H1 (cell line): ENCODE measurements at regions of chr15 and their contacts with region 1.

Region 1: GRCh38 chr15:66504563-66505429 is at the starts of genes RPL4 and ZWILCH:
- DNase-seq: peak; percentile 46 to 82
- H3K4me3 ChIP-seq: peak within 1 kb of the TSS; percentile 95 to 100 (median 99)
- H3K27ac ChIP-seq: peak within 1 kb of the TSS; percentile 93
- H3K4me1 ChIP-seq: peaks cover 0 to 6% (median 5%) of the 10 kb centered on the region in 4 experiments; a peak in 4 of 7 replicates
- H3K27me3 ChIP-seq: no peaks in the 10 kb centered on the region
- CTCF ChIP-seq: no peak
- EP300 ChIP-seq: no peak
- POLR2A ChIP-seq: peak; percentile 96 to 98
- RAD21 ChIP-seq: no peak
- total RNA-seq, gene RPL4: 3,886 and 3,950 TPM in 2 replicates
- total RNA-seq, gene ZWILCH: 61.5 and 62.8 TPM in 2 replicates

Region 2: DNA sequence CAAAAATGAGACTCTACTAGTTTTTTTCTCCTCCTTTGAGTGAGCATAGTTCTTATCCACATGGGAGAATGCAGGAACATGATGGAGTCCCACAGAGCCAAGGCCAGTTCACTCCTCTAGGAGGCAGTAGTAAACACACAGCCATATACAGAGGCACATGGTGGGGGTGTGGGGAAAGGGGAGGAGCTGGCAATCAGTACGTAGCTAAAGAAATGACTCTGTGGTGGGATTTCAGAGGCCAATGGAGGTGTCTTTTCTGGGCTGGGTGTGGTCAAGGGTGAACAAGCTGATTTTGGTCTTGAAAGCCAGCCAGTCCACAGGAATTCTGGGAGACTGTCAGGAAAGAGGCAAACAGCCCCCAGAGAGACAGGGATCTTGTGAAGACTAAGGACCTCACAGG is 642.1 kb before region 1 on chr15:
- CTCF ChIA-PET with region 1: no interaction called
- POLR2A ChIA-PET with region 1: no interaction called
- DNase-seq: peak; percentile 69 to 76
- H3K4me3 ChIP-seq: no peak overlapping the region
- H3K27ac ChIP-seq: no peak overlapping the region
- H3K4me1 ChIP-seq: no peaks in the 10 kb centered on the region; a peak in 1 of 7 replicates
- H3K27me3 ChIP-seq: no peaks in the 10 kb centered on the region
- CTCF ChIP-seq: peak; percentile 58 to 82 (median 65)
- EP300 ChIP-seq: no peak
- POLR2A ChIP-seq: no peak
- RAD21 ChIP-seq: peak; percentile 26 to 49; a peak in 3 of 4 replicates

Region 3: DNA sequence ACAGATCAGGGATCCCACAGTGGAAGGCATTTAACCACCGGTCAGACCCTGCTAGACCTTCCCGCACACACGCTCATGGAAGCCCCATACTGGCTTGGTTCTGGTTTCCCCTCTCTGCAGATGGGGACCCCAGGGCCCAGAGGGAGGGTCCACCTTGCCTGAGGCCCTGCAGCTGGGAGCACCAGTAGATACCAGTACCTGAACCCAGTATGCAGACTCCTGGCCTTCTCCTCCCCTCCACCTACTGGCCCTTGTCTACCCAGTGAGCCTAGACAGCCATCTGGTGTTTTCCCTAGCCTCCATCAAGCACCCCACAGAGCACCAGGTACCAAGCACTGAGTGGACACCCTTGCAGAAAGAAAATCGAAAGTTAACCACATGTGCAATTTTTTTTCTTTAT is 316.3 kb before region 1 on chr15:
- CTCF ChIA-PET with region 1: no interaction called
- POLR2A ChIA-PET with region 1: no interaction called
- DNase-seq: no peak
- H3K4me3 ChIP-seq: no peak overlapping the region
- H3K27ac ChIP-seq: no peak overlapping the region
- H3K4me1 ChIP-seq: peaks cover 9 to 24% (median 10%) of the 10 kb centered on the region in 4 experiments; a peak in 6 of 7 replicates
- H3K27me3 ChIP-seq: no peaks in the 10 kb centered on the region
- CTCF ChIP-seq: peak; percentile 4 to 37 (median 18)
- EP300 ChIP-seq: no peak
- POLR2A ChIP-seq: no peak
- RAD21 ChIP-seq: peak; percentile 53 to 66

Region 4: GRCh38 chr15:66386204-66387123 is 118.3 kb before region 1 on chr15 and contains the start of gene MAP2K1:
- CTCF ChIA-PET with region 1: interaction called, 30 read pairs
- POLR2A ChIA-PET with region 1: interaction called, 58 read pairs
- DNase-seq: peak; percentile 85 to 98
- H3K4me3 ChIP-seq: peak within 1 kb of the TSS; percentile 51 to 96 (median 88)
- H3K27ac ChIP-seq: 0 out of 2 replicates have a peak within 1 kb of the TSS, but pooled peaks have one; percentile 6
- H3K4me1 ChIP-seq: peaks cover 0 to 3% (median 0%) of the 10 kb centered on the region in 4 experiments; a peak in 2 of 7 replicates
- H3K27me3 ChIP-seq: no peaks in the 10 kb centered on the region
- CTCF ChIP-seq: peak; percentile 54 to 77 (median 71)
- EP300 ChIP-seq: no peak
- POLR2A ChIP-seq: peak in 1 of 2 experiments; percentile 54; a peak in 1 of 3 replicates
- RAD21 ChIP-seq: peak; percentile 29 to 41
- total RNA-seq, gene MAP2K1: 70.4 and 78.2 TPM in 2 replicates

Region 5: GRCh38 chr15:66472176-66472999 is 32.4 kb before region 1 on chr15:
- CTCF ChIA-PET with region 1: interaction called, 40 read pairs
- POLR2A ChIA-PET with region 1: interaction called, 24 read pairs
- DNase-seq: no peak
- H3K4me3 ChIP-seq: peak overlapping the region in 1 of 4 experiments; percentile 0; a peak in 1 of 8 replicates
- H3K27ac ChIP-seq: peak overlapping the region; percentile 62; the same call in 1 of the 2 replicates
- H3K4me1 ChIP-seq: peaks cover 23 to 57% (median 44%) of the 10 kb centered on the region in 4 experiments
- H3K27me3 ChIP-seq: no peaks in the 10 kb centered on the region
- CTCF ChIP-seq: no peak
- EP300 ChIP-seq: no peak
- POLR2A ChIP-seq: no peak
- RAD21 ChIP-seq: no peak

Region 6: GRCh38 chr15:66483131-66483566 is 21.6 kb before region 1 on chr15:
- CTCF ChIA-PET with region 1: no interaction called
- POLR2A ChIA-PET with region 1: interaction called, 56 read pairs
- DNase-seq: no peak
- H3K4me3 ChIP-seq: no peak overlapping the region
- H3K27ac ChIP-seq: no peak overlapping the region
- H3K4me1 ChIP-seq: no peaks in the 10 kb centered on the region
- H3K27me3 ChIP-seq: no peaks in the 10 kb centered on the region
- CTCF ChIP-seq: no peak
- EP300 ChIP-seq: no peak
- POLR2A ChIP-seq: no peak
- RAD21 ChIP-seq: no peak

Region 7: DNA sequence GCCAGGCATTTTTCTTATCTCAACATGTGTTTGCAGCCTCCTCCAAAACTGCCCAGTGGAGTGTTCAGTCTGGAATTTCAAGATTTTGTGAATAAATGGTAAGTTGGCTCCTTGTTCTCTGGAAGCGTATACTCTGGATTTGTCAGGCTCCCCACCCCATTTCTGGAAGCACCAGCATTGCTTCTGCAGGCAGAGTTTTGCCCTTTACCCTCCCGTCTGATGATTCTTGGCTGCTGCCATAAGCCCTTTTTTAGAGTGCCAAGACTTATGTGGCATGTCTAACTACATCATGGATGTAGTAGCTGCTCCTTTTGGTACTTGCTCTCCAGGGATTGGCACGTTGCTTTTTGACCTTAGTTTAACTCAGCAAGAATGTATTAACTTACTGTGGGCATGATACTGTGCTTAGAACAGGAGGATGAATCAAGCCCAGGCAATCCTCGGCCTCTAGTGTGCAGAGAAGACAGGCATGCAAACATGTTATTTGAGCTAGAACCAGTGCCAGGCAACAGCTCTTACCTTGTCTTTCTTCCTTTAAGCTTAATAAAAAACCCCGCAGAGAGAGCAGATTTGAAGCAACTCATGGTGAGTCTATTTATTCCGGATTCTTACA is 15.5 kb before region 1 on chr15:
- CTCF ChIA-PET with region 1: interaction called, 5 read pairs
- POLR2A ChIA-PET with region 1: interaction called, 56 read pairs
- DNase-seq: no peak
- H3K4me3 ChIP-seq: no peak overlapping the region
- H3K27ac ChIP-seq: no peak overlapping the region
- H3K4me1 ChIP-seq: peaks cover 0 to under 1% (median 0%) of the 10 kb centered on the region in 4 experiments; a peak in 1 of 7 replicates
- H3K27me3 ChIP-seq: no peaks in the 10 kb centered on the region
- CTCF ChIP-seq: no peak
- EP300 ChIP-seq: no peak
- POLR2A ChIP-seq: peak in 1 of 2 experiments; percentile 19; a peak in 1 of 3 replicates
- RAD21 ChIP-seq: no peak

Region 8: GRCh38 chr15:66515901-66516322 is 11.1 kb after region 1 on chr15:
- CTCF ChIA-PET with region 1: no interaction called
- POLR2A ChIA-PET with region 1: interaction called, 52 read pairs
- DNase-seq: no peak
- H3K4me3 ChIP-seq: no peak overlapping the region
- H3K27ac ChIP-seq: no peak overlapping the region
- H3K4me1 ChIP-seq: no peaks in the 10 kb centered on the region
- H3K27me3 ChIP-seq: no peaks in the 10 kb centered on the region
- CTCF ChIP-seq: no peak
- EP300 ChIP-seq: no peak
- POLR2A ChIP-seq: no peak
- RAD21 ChIP-seq: no peak

Region 9: DNA sequence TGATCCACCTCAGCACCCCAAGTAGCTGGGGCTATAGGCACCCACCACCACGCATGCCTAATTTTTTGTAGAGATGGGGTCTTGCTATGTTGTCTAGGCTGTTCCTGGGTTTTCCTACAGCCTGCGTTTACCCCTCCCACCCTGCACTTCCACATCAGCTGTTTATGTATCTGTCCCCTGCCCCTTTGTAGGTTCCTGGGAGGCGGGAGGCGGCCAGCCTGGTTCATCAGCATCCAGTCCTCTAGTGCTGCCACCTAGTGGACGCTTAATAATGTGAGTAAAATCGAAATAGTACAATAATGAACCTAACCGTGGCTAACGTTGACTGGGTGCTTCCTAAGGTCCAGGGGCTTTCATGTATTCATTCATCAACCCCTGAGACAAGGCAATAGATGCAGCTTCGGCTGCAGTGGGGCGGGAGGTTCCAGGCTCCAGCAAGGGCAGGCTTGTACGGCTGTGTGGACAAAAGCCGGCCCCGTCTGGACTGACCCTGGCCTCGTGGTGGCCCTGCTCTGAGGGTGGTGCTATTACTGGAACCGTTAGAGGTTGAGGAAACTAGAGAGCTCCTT is 62.3 kb after region 1 on chr15:
- CTCF ChIA-PET with region 1: interaction called, 5 read pairs
- POLR2A ChIA-PET with region 1: interaction called, 38 read pairs
- DNase-seq: peak; percentile 53 to 80
- H3K4me3 ChIP-seq: no peak overlapping the region
- H3K27ac ChIP-seq: no peak overlapping the region
- H3K4me1 ChIP-seq: peaks cover 4 to 22% (median 17%) of the 10 kb centered on the region in 4 experiments
- H3K27me3 ChIP-seq: no peaks in the 10 kb centered on the region
- CTCF ChIP-seq: peak; percentile 33 to 75 (median 58)
- EP300 ChIP-seq: peak in 1 of 2 experiments; percentile 33; a peak in 1 of 3 replicates
- POLR2A ChIP-seq: no peak
- RAD21 ChIP-seq: peak; percentile 37 to 59